GM10248 (cell line): ENCODE measurements at regions of chr20 and their contacts with region 1.

Region 1: GRCh38 chr20:48657475-48658470 is 170.0 kb downstream of the PREX1 start:
- DNase-seq: peak; percentile 89
- CTCF ChIP-seq: peak; percentile 92

Region 2: DNA sequence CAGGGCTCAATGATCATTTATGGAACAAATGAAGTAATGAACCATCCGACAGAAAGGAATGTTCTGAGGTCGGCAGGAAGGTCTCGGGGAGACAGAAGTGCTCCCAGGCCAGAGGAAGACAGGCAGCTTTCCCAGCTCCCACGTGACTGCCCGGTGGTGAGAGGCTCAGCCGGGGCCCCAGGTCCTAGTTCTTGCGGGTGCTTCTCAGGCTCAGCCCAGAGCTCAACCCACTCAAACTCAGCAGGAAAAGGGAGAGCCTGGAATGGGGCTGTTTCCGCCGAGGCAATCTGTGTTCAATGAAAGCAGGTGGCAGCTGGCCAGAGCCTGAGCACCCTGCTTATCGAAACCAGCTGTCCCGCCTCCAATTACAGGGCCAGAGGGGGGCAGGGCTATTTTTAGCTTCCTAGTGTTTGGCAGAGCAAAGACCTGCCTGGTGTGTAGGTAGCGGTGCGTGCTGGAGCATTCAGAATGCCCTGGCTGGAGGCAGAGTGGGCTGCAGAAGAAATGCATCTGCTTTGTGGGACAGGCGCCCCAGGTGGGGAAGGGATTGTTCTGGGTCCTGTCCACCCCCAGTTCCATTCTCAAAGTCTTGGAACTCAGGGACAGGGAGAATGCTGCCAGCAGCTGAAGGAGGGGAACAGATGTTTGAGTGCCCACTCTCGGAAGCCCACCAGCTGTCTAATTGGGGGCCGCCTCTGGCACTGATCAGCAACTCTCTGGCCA is 24.9 kb after region 1 on chr20:
- CTCF ChIA-PET with region 1: interaction called, 13 read pairs
- POLR2A ChIA-PET with region 1: no interaction called
- DNase-seq: no peak
- CTCF ChIP-seq: no peak

Region 3: GRCh38 chr20:48738399-48739304 is 80.9 kb after region 1 on chr20:
- CTCF ChIA-PET with region 1: interaction called, 11 read pairs
- POLR2A ChIA-PET with region 1: no interaction called
- DNase-seq: peak; percentile 77
- CTCF ChIP-seq: no peak

Region 4: DNA sequence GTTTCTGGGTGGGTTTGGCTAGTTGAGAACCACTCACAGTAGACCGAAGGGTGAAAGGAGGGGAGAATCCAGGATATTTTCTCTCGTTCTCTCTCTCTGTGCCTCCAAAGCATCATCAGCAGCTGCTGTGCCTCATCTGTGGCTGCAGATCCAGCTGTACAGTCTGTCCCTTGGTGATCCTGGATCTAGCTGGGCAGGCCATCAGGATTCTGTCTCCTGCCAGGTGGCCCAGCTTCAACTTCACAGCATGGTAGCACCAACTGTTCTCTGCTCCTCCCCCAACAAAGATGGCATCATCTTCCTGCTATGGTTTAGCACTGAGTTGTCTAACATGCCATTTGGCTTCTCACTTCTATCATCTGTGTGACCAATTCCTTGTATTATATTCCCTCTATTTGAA is 235.1 kb after region 1 on chr20:
- CTCF ChIA-PET with region 1: interaction called, 11 read pairs
- POLR2A ChIA-PET with region 1: no interaction called
- DNase-seq: no peak
- CTCF ChIP-seq: no peak

Region 5: DNA sequence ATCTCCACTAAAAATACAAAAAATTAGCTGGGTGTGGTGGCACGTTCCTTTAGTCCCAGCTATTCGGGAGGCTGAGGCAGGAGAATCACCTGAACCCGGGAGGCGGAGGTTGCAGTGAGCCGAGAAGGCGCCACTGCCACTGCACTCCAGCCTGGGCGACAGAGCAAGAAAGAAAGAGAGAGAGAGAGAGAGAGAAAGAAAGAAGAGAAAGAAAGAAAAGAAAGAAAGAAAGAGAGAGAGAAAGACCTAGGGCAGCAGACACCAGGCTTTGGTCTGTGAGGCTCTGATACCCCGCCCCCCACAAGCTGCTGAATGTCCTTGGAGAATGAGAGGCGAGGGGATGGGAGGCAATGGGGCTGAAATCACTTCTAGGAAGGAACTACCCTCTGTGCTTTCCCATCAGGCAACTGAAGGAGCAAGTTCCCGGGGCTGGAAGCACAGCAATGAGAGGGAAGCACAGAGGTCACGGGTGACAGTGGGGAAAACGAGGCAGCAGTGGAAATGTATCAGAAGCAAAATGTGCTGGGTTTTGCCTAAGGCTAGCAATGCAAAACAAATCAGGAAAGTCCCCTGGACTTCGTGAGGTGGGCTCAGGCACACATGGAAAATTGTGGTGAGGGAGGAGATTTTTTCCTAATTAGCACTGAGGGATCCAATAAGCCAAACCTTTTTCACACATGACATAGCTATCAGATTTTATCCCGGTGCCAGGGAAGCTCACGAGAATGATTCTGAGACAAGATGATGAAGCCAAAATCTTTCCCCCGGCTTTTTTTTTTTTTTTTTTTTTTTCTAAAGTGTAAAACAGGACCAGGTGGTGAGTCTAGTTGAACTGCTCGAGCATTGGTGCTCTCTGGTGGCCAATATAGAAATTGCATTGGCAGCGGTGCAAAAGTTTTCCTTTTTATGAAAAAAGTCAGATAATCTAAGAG is 246.9 kb after region 1 on chr20:
- CTCF ChIA-PET with region 1: interaction called, 153 read pairs
- POLR2A ChIA-PET with region 1: no interaction called
- DNase-seq: peak; percentile 72
- CTCF ChIP-seq: peak; percentile 66

Region 6: GRCh38 chr20:48945851-48946514 is 288.2 kb after region 1 on chr20:
- CTCF ChIA-PET with region 1: interaction called, 20 read pairs
- POLR2A ChIA-PET with region 1: no interaction called
- DNase-seq: no peak
- CTCF ChIP-seq: no peak